Activated CD8-positive, alpha-beta T cell treated with anti-CD3 and anti-CD28 coated beads for 36 hours (primary cell): ENCODE measurements at regions of chr6 and their contacts with region 1.

Region 1: DNA sequence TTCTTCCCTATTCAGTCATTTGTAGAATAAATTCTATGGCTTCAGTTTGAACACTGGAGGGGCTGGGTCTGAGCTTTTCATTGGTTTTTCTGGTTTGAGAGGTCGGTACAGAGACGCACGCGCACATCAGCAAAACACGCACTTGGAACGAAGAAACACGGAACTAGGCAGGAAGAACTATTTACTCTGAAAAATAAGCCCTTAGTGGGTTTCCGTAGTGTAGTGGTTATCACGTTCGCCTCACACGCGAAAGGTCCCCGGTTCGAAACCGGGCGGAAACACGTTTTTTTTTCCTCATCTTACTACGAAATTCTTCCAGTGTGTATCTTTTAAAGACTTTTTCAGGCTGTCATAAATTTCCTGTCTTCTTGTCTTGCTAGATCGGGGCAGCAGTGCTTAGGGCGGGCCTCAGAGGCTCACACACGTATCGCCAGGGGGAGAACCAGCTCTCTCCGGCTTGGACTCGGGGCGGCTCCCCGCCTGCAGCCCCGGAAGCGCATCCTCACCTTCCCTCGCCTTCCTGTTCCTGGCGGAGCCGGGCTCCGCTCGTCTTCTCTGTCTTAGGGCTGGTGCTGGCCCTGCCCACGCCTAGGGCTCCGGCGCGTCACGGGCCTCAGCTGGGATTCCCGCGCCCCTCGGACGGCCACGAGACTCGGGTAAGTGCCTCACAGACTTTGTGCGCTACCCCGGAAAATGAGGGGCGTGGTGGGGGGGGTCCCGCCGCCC is at the start of gene HMGN4:
- DNase-seq: peak; percentile 85
- ATAC-seq: peak; percentile 57
- H3K4me3 Mint-ChIP-seq: peak within 1 kb of the TSS; percentile 95
- H3K27ac Mint-ChIP-seq: peak within 1 kb of the TSS; percentile 99
- H3K4me1 Mint-ChIP-seq: peaks cover 49% of the 10 kb centered on the region
- H3K27me3 Mint-ChIP-seq: peaks cover 1% of the 10 kb centered on the region
- CTCF ChIP-seq: no peak
- total RNA-seq, gene HMGN4: 80.2 to 83.3 TPM

Region 2: GRCh38 chr6:26493258-26493657 is 44.8 kb before region 1 on chr6:
- CTCF ChIA-PET with region 1: no interaction called
- POLR2A ChIA-PET with region 1: no interaction called
- intact Hi-C with region 1: no loop called
- DNase-seq: no peak
- ATAC-seq: peak; percentile 80
- H3K4me3 Mint-ChIP-seq: no peak overlapping the region
- H3K27ac Mint-ChIP-seq: no peak overlapping the region
- H3K4me1 Mint-ChIP-seq: peaks cover 10% of the 10 kb centered on the region
- H3K27me3 Mint-ChIP-seq: peaks cover 2% of the 10 kb centered on the region
- CTCF ChIP-seq: peak; percentile 35

Region 3: GRCh38 chr6:26520853-26521599 is 17.0 kb before region 1 on chr6:
- CTCF ChIA-PET with region 1: interaction called, 3 read pairs
- POLR2A ChIA-PET with region 1: interaction called, 27 read pairs
- intact Hi-C with region 1: no loop called
- DNase-seq: peak; percentile 90
- ATAC-seq: peak; percentile 74
- H3K4me3 Mint-ChIP-seq: peak overlapping the region; percentile 79
- H3K27ac Mint-ChIP-seq: peak overlapping the region; percentile 86
- H3K4me1 Mint-ChIP-seq: peaks cover 26% of the 10 kb centered on the region
- H3K27me3 Mint-ChIP-seq: peaks cover 2% of the 10 kb centered on the region
- CTCF ChIP-seq: no peak